ENCODE measurements at regions of chr4 and their contacts with region 1.

Region 1: DNA sequence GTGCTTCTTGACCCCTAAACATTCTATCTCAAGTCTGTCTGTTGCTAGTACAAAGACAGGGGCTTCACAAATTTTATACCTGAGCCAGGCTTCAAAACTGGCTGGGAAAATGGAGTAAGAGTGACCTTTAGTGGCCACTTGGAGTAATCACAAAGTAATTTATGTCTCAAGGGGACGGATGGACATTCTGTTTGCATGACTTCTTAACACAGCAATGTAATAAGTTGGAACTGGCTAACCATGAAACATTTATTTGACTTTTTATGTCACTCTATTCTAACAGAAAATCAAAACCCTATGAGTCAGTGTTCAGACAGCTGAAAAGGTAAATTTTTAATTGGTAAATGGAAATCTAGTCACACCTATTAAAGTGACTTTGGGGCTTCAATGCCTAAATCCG is 600.6 kb downstream of the ANKRD50 start:
- DNase-seq: peak; percentile 42
- ATAC-seq: peak; percentile 91
- H3K4me3 ChIP-seq: no peak overlapping the region
- H3K27ac ChIP-seq: peak overlapping the region; percentile 82
- H3K4me1 ChIP-seq: peaks cover 17% of the 10 kb centered on the region; the same call in 1 of the 2 replicates
- H3K27me3 ChIP-seq: no peaks in the 10 kb centered on the region
- CTCF ChIP-seq: peak; percentile 65

Region 2: DNA sequence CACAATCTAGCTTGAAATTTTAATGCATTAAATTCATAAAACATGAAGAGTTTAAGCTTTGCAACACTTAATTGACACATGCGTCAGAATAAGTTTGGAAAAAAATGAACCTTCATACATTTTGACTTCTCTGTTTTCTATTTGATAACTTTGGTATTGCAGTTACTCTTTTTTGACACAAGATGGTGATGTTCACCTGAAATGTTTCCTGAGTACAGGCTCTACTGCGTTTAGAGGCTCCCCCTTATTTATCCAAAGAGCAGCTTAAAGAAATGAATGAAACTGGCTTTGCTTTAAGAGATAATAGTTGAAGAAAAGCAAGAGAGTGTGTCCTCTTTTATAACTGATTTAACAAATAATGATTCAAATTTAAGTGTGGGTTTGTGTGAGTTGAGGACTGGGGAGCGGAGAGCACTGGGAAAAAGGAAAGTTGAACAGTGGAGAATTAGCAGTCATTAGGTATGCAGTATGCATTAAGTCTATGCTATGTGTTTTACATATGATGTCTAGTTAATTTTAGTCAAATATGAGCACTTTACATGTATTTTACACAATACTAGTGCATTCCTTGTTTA is 1008.9 kb before region 1 on chr4:
- CTCF ChIA-PET with region 1: no interaction called
- POLR2A ChIA-PET with region 1: no interaction called
- in situ Hi-C with region 1: no loop called
- intact Hi-C with region 1: loop called (anchors 5 kb)
- DNase-seq: no peak
- ATAC-seq: peak; percentile 83
- H3K4me3 ChIP-seq: no peak overlapping the region
- H3K27ac ChIP-seq: peak overlapping the region; percentile 72; the same call in 1 of the 2 replicates
- H3K4me1 ChIP-seq: no peaks in the 10 kb centered on the region; the same call in 1 of the 2 replicates
- H3K27me3 ChIP-seq: no peaks in the 10 kb centered on the region
- CTCF ChIP-seq: peak; percentile 57; the same call in 1 of the 2 replicates

Region 3: GRCh38 chr4:123588631-123589241 is 523.2 kb before region 1 on chr4:
- CTCF ChIA-PET with region 1: no interaction called
- POLR2A ChIA-PET with region 1: no interaction called
- in situ Hi-C with region 1: no loop called
- intact Hi-C with region 1: loop called (anchors 10 kb)
- DNase-seq: no peak
- ATAC-seq: peak; percentile 89
- H3K4me3 ChIP-seq: no peak overlapping the region
- H3K27ac ChIP-seq: peak overlapping the region; percentile 99
- H3K4me1 ChIP-seq: peaks cover 20% of the 10 kb centered on the region
- H3K27me3 ChIP-seq: no peaks in the 10 kb centered on the region
- CTCF ChIP-seq: no peak

Region 4: DNA sequence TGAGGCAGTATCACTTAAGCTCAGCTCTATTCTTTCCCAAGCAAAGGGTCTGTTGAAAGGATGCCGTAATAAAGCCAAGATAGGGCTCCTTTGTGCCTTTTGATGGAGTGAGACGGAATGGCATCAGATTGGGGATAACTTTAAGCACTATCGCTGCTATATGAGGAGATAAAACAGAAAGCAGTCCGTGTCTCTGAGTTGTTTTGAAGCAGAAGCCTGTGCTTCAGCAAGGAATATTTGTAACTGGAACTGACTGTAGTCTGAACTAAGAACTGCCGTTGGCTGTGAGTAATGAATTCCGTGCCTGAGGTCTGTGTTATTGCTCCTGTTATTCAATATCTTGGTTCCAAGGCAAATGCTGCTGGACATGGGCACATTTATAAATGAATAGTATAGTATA is 303.2 kb after region 1 on chr4:
- CTCF ChIA-PET with region 1: no interaction called
- POLR2A ChIA-PET with region 1: no interaction called
- in situ Hi-C with region 1: no loop called
- intact Hi-C with region 1: no loop called
- DNase-seq: no peak
- ATAC-seq: no peak
- H3K4me3 ChIP-seq: no peak overlapping the region
- H3K27ac ChIP-seq: no peak overlapping the region
- H3K4me1 ChIP-seq: no peaks in the 10 kb centered on the region
- H3K27me3 ChIP-seq: no peaks in the 10 kb centered on the region; the same call in 1 of the 2 replicates
- CTCF ChIP-seq: no peak